ENCODE measurements at regions of chr6 and their contacts with region 1.

Region 1: DNA sequence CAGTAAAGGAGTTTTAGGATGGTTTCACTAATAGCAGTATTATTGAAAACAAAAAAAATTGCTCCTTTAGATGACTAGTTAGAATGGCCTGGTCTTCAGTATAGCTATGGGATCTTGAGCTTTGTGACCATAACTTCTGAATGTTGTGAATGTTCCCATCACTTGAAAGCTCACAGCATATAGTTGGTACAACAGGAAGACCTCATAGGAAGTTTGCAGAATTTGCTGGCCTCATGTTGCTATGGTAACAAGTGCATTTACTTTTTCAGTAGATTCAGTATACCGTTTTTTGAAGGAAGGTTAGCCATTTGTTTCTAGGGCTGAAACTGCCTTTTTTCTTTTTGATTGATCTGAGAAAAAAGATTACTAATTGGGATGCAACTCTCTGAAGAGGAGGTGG is 8.3 kb downstream of the PHF3 start:
- H3K4me3 Mint-ChIP-seq: no peak overlapping the region
- H3K27ac Mint-ChIP-seq: no peak overlapping the region
- H3K4me1 Mint-ChIP-seq: peaks cover 29% of the 10 kb centered on the region
- H3K27me3 Mint-ChIP-seq: no peaks in the 10 kb centered on the region

Region 2: GRCh38 chr6:63571881-63572732 is 71.8 kb before region 1 on chr6 and contains the starts of genes LOC128125822 and PTP4A1:
- intact Hi-C with region 1: no loop called
- H3K4me3 Mint-ChIP-seq: peak within 1 kb of the TSS; percentile 93
- H3K27ac Mint-ChIP-seq: peak within 1 kb of the TSS; percentile 97
- H3K4me1 Mint-ChIP-seq: peaks cover 5% of the 10 kb centered on the region
- H3K27me3 Mint-ChIP-seq: peaks cover 2% of the 10 kb centered on the region

Region 3: DNA sequence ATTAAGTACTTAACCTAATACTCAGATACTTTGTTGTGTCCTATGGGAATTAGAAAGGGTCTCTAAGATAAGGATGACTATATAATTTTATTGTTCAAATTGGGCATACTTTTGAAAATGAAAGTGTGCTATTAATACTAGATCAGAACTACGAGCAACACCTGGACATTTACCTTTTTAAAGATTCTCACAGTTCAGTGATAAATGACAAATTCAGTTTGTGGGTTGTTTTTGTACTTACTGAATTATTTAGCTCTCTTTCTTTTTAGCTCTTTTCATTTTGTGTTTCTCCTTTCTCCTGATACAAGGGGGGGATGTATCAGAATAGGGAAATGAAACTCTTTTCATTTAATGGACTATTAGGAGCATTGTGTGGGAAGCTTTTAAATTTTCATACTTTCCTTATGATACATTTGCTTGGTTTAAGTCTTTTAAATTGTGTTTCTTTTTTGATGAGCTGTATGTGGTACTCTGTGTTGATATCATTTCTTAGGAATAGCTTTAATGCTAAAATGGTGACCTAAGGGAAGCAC is 39.3 kb after region 1 on chr6:
- intact Hi-C with region 1: loop called (anchors 5 kb)
- H3K4me3 Mint-ChIP-seq: no peak overlapping the region
- H3K27ac Mint-ChIP-seq: no peak overlapping the region
- H3K4me1 Mint-ChIP-seq: peaks cover 45% of the 10 kb centered on the region
- H3K27me3 Mint-ChIP-seq: no peaks in the 10 kb centered on the region

Region 4: DNA sequence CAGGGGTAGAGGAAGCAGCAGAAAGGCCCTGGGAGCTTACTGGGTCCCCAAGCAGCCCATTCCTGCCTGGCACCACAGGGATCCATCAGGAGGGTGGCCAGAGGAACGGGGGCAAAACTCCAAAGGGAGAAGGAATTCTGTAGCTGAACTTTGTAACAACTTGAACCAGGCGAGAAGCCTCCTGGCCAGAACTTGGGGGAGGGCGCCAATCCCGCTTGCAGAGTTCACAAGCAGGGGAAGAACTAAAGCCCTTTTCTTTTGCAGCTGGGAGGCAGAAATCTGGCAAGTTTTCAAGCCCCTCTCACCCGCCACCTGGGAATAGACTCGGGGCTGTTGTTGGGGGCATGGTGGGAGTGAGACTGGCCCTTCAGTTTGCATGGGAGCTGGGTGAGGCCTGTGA is 180.9 kb after region 1 on chr6:
- intact Hi-C with region 1: no loop called
- H3K4me3 Mint-ChIP-seq: no peak overlapping the region
- H3K27ac Mint-ChIP-seq: no peak overlapping the region
- H3K4me1 Mint-ChIP-seq: peaks cover 5% of the 10 kb centered on the region
- H3K27me3 Mint-ChIP-seq: no peaks in the 10 kb centered on the region